GM12878 (cell line): ENCODE measurements at regions of chr19 and their contacts with region 1.

Region 1: GRCh38 chr19:54357381-54357780 is 7.3 kb downstream of the LAIR1 start:
- DNase-seq: no peak
- ATAC-seq: no peak
- H3K4me3 ChIP-seq: no peak overlapping the region
- H3K27ac ChIP-seq: no peak overlapping the region
- H3K4me1 ChIP-seq: no peaks in the 10 kb centered on the region
- H3K27me3 ChIP-seq: no peaks in the 10 kb centered on the region
- CTCF ChIP-seq: no peak
- EP300 ChIP-seq: no peak
- POLR2A ChIP-seq: no peak
- RAD21 ChIP-seq: no peak

Region 2: GRCh38 chr19:54316746-54317107 is 40.7 kb before region 1 on chr19:
- CTCF ChIA-PET with region 1: interaction called, 171 read pairs
- POLR2A ChIA-PET with region 1: interaction called, 4 read pairs
- RAD21 ChIA-PET with region 1: interaction called, 4 read pairs
- SMC1A ChIA-PET with region 1: no interaction called
- in situ Hi-C with region 1: no loop called
- intact Hi-C with region 1: no loop called
- DNase-seq: no peak
- ATAC-seq: no peak
- H3K4me3 ChIP-seq: no peak overlapping the region
- H3K27ac ChIP-seq: no peak overlapping the region
- H3K4me1 ChIP-seq: no peaks in the 10 kb centered on the region
- H3K27me3 ChIP-seq: no peaks in the 10 kb centered on the region
- CTCF ChIP-seq: no peak
- EP300 ChIP-seq: no peak
- POLR2A ChIP-seq: no peak
- RAD21 ChIP-seq: no peak

Region 3: GRCh38 chr19:54399189-54399588 is 41.8 kb after region 1 on chr19:
- CTCF ChIA-PET with region 1: no interaction called
- POLR2A ChIA-PET with region 1: no interaction called
- RAD21 ChIA-PET with region 1: no interaction called
- SMC1A ChIA-PET with region 1: no interaction called
- in situ Hi-C with region 1: no loop called
- intact Hi-C with region 1: no loop called
- DNase-seq: no peak
- ATAC-seq: no peak
- H3K4me3 ChIP-seq: no peak overlapping the region
- H3K27ac ChIP-seq: no peak overlapping the region
- H3K4me1 ChIP-seq: no peaks in the 10 kb centered on the region
- H3K27me3 ChIP-seq: no peaks in the 10 kb centered on the region
- CTCF ChIP-seq: no peak
- EP300 ChIP-seq: no peak
- POLR2A ChIP-seq: no peak
- RAD21 ChIP-seq: no peak

Region 4: GRCh38 chr19:54418030-54418929 is 60.9 kb after region 1 on chr19:
- CTCF ChIA-PET with region 1: no interaction called
- POLR2A ChIA-PET with region 1: no interaction called
- RAD21 ChIA-PET with region 1: no interaction called
- SMC1A ChIA-PET with region 1: no interaction called
- in situ Hi-C with region 1: no loop called
- intact Hi-C with region 1: no loop called
- DNase-seq: no peak
- ATAC-seq: peak; percentile 81
- H3K4me3 ChIP-seq: no peak overlapping the region; the same call in 1 of the 2 replicates
- H3K27ac ChIP-seq: no peak overlapping the region
- H3K4me1 ChIP-seq: peaks cover 8% of the 10 kb centered on the region
- H3K27me3 ChIP-seq: peaks cover 0 to 3% of the 10 kb centered on the region in 2 experiments; a peak in 2 of 4 replicates
- CTCF ChIP-seq: no peak
- EP300 ChIP-seq: no peak
- POLR2A ChIP-seq: no peak
- RAD21 ChIP-seq: no peak